H1 (cell line): ENCODE measurements at regions of chr18 and their contacts with region 1.

Region 1: GRCh38 chr18:48230467-48231113 is 178.6 kb downstream of the ZBTB7C start:
- DNase-seq: peak; percentile 34 to 84
- H3K4me3 ChIP-seq: no peak overlapping the region
- H3K27ac ChIP-seq: no peak overlapping the region
- H3K4me1 ChIP-seq: peaks cover 0 to 1% (median 0%) of the 10 kb centered on the region in 4 experiments; a peak in 1 of 7 replicates
- H3K27me3 ChIP-seq: no peaks in the 10 kb centered on the region
- CTCF ChIP-seq: peak; percentile 92 to 98 (median 97)
- EP300 ChIP-seq: no peak
- POLR2A ChIP-seq: no peak
- RAD21 ChIP-seq: peak; percentile 97

Region 2: DNA sequence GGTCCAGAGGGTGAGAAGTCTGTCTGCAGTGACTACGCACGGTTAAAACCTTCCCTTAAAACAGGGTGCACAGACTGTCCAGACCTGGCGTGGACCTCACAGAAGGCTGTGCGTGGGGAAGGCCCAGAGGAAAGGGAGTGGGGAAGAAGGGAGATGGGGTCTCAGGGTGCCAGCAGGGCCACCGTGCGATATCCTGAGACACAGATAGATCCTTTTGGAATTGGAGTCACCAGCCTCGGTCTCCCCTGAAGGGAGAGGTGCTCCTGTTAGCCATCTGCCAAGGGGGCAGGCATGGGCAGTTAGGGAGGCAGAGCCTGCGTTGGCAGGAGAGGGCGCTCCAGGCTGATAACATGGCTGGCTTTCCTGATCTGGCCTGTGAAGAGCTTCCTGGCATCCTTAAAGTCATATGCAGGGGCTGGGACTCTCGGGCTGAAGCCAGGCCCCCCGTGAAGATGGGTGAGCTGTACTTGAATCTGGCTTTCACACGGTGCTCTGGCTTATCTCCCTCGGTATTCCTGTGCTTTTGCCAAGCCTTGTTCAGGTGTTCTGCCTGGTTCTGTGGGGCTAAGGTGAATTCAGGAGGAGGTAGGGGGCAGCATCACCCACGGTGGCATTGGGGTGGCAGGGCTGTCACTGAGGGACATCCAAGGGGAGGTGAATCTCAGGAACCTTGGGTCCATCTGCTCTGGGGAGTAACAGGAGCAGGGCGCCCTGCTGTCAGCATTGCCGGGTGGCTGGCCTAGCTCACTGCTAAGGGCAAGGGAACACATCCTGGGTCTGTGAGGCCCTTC is 192.9 kb before region 1 on chr18:
- CTCF ChIA-PET with region 1: interaction called, 72 read pairs
- POLR2A ChIA-PET with region 1: no interaction called
- DNase-seq: peak in 1 of 2 experiments; percentile 69
- H3K4me3 ChIP-seq: no peak overlapping the region
- H3K27ac ChIP-seq: no peak overlapping the region
- H3K4me1 ChIP-seq: no peaks in the 10 kb centered on the region
- H3K27me3 ChIP-seq: no peaks in the 10 kb centered on the region; a peak in 1 of 7 replicates
- CTCF ChIP-seq: peak; percentile 78 to 88 (median 87)
- EP300 ChIP-seq: no peak
- POLR2A ChIP-seq: no peak
- RAD21 ChIP-seq: peak; percentile 83 to 86

Region 3: DNA sequence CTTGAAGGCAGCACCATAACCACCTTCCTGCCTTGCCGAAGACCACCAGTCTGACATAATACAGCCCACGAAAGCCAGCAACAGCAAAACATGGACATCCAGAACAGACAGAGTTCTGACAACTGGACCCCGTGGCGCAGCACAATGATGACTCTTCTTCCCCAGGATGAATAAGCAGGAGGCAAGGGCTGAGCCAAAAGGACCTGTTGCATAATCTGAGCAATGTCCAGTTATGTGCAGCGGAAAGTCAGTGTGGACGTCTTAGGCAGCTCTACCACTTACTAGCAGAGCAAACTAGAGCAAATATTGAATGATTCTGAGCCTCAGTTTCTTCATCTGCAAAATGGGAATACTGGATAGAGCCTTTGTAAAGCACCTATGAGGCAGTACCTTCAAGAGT is 46.5 kb before region 1 on chr18:
- CTCF ChIA-PET with region 1: no interaction called
- POLR2A ChIA-PET with region 1: no interaction called
- DNase-seq: no peak
- H3K4me3 ChIP-seq: no peak overlapping the region
- H3K27ac ChIP-seq: no peak overlapping the region
- H3K4me1 ChIP-seq: peaks cover 0 to 11% (median 4%) of the 10 kb centered on the region in 4 experiments; a peak in 3 of 7 replicates
- H3K27me3 ChIP-seq: 0 out of 7 replicates have a peak, but pooled peaks cover 0 to 2% (median 0%) of the 10 kb centered on the region in 4 experiments
- CTCF ChIP-seq: no peak
- EP300 ChIP-seq: no peak
- POLR2A ChIP-seq: no peak
- RAD21 ChIP-seq: no peak

Region 4: DNA sequence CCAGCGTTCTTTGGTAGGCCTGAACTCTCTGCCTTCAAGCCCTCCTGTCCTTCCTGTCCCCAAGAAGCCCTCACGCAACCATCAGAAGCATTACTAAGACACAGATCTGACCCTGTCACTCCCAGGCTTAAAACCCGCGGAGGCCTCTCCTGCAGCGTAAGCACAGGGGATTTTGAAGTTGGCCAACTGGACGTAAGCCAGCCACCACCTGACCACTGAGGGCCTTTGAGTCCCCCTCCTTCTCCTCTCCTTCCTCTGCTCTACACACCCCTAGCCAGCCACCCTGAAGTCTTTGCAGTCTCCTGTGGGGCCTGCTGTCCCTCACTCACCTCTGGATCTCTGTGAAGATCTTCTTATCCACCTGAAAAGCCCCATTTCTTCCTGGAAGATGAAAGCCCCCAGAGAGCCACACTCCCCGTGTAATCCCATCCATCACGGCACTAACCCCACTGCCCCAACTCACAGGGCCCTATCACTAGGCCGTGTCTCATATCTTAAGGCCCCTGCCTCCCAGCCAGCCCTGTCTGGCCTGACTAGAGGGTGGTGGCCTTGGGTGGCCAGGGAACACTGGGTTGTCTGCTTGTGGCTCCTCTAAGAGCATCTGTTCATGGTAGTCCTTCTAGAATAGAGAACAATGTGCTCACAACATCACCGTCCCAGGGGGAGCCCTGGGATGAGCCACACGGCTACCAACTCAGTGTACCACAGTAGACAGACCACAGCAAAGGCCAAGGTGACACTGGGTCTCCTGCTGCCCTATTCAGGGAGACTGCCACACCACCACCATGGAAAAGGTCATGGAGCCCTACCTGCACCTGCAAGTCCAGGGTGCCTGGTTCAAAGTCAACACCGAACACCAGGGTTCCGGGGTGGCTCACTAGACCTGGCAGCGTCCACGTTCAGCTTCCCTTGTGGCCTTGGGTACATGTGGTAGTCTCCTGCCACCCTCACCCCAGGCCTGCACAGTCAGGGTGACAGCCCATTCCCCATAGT is 13.0 kb before region 1 on chr18:
- CTCF ChIA-PET with region 1: interaction called, 23 read pairs
- POLR2A ChIA-PET with region 1: no interaction called
- DNase-seq: no peak
- H3K4me3 ChIP-seq: no peak overlapping the region
- H3K27ac ChIP-seq: no peak overlapping the region
- H3K4me1 ChIP-seq: peaks cover 0 to 2% (median under 1%) of the 10 kb centered on the region in 4 experiments; a peak in 1 of 7 replicates
- H3K27me3 ChIP-seq: no peaks in the 10 kb centered on the region; a peak in 1 of 7 replicates
- CTCF ChIP-seq: no peak
- EP300 ChIP-seq: no peak
- POLR2A ChIP-seq: no peak
- RAD21 ChIP-seq: no peak

Region 5: DNA sequence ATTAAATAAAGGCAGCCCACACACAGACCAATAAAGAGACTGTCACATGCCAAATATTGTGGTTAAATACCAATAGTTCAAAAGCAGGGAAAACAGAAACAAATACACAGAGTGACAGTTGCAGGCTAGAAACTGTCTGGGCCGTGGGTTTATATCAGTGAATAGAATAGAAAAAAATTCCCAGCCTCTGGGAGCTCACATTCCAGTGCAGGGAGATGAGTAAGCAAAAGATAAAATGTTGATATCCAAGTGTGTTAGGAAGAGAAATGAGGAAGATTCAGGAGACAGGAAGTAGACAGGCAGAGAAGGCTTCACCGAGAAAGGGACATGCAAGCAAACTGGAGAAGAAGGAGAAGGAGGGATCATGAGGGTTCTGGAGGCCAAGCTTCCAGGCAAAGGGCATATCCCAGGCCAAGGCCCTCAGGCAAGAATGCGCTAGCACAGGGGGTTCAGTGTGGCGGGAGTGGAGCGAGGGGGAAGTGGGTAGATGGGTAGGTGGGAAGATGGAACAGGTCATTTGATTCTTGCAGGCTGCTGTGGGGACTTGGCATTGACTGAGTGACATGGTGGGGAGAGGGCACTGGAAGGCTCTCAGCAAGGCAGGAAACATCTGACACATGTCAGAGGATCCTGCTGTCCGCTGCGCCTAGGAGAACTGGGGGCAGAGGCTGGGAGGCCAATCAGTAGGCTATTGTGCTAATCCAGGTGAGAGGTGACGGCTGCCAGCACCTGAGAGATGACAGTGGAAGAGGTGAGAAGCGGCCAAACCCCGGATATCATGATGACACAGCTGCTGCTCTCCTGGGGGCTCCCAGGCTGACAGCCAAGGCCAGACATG is 89.4 kb after region 1 on chr18:
- CTCF ChIA-PET with region 1: interaction called, 18 read pairs
- POLR2A ChIA-PET with region 1: no interaction called
- DNase-seq: no peak
- H3K4me3 ChIP-seq: no peak overlapping the region
- H3K27ac ChIP-seq: no peak overlapping the region
- H3K4me1 ChIP-seq: peaks cover 0 to 2% (median under 1%) of the 10 kb centered on the region in 4 experiments; a peak in 2 of 7 replicates
- H3K27me3 ChIP-seq: no peaks in the 10 kb centered on the region
- CTCF ChIP-seq: no peak
- EP300 ChIP-seq: no peak
- POLR2A ChIP-seq: no peak
- RAD21 ChIP-seq: no peak

Region 6: DNA sequence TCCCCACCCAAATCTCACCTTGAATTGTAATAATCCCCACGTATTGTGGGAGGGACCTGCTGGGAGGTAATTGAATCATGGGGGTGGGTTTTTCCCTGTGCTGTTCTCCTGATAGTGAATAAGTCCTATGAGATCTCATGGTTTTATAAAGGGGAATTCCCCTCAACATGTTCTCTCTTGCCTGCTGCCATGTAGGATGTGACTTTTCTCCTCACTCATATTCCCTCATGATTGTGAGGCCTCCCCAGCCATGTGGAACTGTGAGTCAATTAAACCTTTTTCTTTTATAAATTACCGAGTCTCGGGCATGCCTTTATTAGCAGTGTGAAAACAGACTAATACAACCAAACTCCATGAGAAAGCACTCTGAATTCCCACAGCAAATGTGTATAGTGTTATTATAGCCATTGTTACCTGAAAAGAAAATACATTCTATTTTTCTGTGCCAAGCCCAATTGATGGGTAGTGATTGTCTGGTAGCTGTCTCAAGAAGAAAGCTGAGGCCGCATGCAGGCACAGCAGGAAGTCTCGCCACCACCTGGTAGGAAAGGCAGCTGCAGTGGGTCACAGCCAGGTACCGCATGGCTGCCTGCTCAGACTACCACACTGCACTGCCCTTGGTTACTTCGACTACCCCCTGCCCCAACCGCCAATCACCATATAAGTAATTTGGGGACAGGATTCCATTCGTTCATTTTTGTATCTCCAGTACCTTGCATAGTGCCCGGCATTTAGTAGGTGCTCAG is 188.9 kb after region 1 on chr18:
- CTCF ChIA-PET with region 1: interaction called, 26 read pairs
- POLR2A ChIA-PET with region 1: no interaction called
- DNase-seq: no peak
- H3K4me3 ChIP-seq: no peak overlapping the region
- H3K27ac ChIP-seq: no peak overlapping the region
- H3K4me1 ChIP-seq: no peaks in the 10 kb centered on the region; a peak in 1 of 7 replicates
- H3K27me3 ChIP-seq: peaks cover 1 to 11% (median 4%) of the 10 kb centered on the region in 4 experiments; a peak in 4 of 7 replicates
- CTCF ChIP-seq: peak; percentile 43 to 68 (median 57)
- EP300 ChIP-seq: no peak
- POLR2A ChIP-seq: no peak
- RAD21 ChIP-seq: peak in 1 of 2 experiments; percentile 37; a peak in 1 of 4 replicates

Region 7: GRCh38 chr18:48445540-48445939 is 214.9 kb after region 1 on chr18:
- CTCF ChIA-PET with region 1: interaction called, 160 read pairs
- POLR2A ChIA-PET with region 1: no interaction called
- DNase-seq: peak; percentile 31 to 92
- H3K4me3 ChIP-seq: no peak overlapping the region
- H3K27ac ChIP-seq: no peak overlapping the region
- H3K4me1 ChIP-seq: peaks cover 0 to 2% (median 2%) of the 10 kb centered on the region in 4 experiments; a peak in 2 of 7 replicates
- H3K27me3 ChIP-seq: no peaks in the 10 kb centered on the region; a peak in 1 of 7 replicates
- CTCF ChIP-seq: peak; percentile 88 to 98 (median 94)
- EP300 ChIP-seq: no peak
- POLR2A ChIP-seq: no peak
- RAD21 ChIP-seq: peak; percentile 72 to 79

Region 8: GRCh38 chr18:48525671-48526070 is 295.1 kb after region 1 on chr18:
- CTCF ChIA-PET with region 1: no interaction called
- POLR2A ChIA-PET with region 1: no interaction called
- DNase-seq: no peak
- H3K4me3 ChIP-seq: no peak overlapping the region
- H3K27ac ChIP-seq: no peak overlapping the region
- H3K4me1 ChIP-seq: peaks cover 0 to 2% (median 2%) of the 10 kb centered on the region in 4 experiments; a peak in 1 of 7 replicates
- H3K27me3 ChIP-seq: no peaks in the 10 kb centered on the region
- CTCF ChIP-seq: no peak
- EP300 ChIP-seq: no peak
- POLR2A ChIP-seq: no peak
- RAD21 ChIP-seq: no peak

Region 9: GRCh38 chr18:48735080-48735676 is 504.6 kb after region 1 on chr18:
- CTCF ChIA-PET with region 1: no interaction called
- POLR2A ChIA-PET with region 1: no interaction called
- DNase-seq: peak in 1 of 2 experiments; percentile 7
- H3K4me3 ChIP-seq: no peak overlapping the region
- H3K27ac ChIP-seq: no peak overlapping the region
- H3K4me1 ChIP-seq: peaks cover 0 to 6% (median 1%) of the 10 kb centered on the region in 4 experiments; a peak in 2 of 7 replicates
- H3K27me3 ChIP-seq: no peaks in the 10 kb centered on the region
- CTCF ChIP-seq: peak in 2 of 3 experiments; percentile 7 to 29; a peak in 2 of 4 replicates
- EP300 ChIP-seq: no peak
- POLR2A ChIP-seq: no peak
- RAD21 ChIP-seq: peak; percentile 12 to 34; a peak in 2 of 4 replicates